Activated CD8-positive, alpha-beta T cell treated with anti-CD3 and anti-CD28 coated beads, Interleukin-2, amount 10 ng/mL, durations not matched to agents 7 days and 5 days (primary cell): ENCODE measurements at regions of chr13 and their contacts with region 1.

Region 1: DNA sequence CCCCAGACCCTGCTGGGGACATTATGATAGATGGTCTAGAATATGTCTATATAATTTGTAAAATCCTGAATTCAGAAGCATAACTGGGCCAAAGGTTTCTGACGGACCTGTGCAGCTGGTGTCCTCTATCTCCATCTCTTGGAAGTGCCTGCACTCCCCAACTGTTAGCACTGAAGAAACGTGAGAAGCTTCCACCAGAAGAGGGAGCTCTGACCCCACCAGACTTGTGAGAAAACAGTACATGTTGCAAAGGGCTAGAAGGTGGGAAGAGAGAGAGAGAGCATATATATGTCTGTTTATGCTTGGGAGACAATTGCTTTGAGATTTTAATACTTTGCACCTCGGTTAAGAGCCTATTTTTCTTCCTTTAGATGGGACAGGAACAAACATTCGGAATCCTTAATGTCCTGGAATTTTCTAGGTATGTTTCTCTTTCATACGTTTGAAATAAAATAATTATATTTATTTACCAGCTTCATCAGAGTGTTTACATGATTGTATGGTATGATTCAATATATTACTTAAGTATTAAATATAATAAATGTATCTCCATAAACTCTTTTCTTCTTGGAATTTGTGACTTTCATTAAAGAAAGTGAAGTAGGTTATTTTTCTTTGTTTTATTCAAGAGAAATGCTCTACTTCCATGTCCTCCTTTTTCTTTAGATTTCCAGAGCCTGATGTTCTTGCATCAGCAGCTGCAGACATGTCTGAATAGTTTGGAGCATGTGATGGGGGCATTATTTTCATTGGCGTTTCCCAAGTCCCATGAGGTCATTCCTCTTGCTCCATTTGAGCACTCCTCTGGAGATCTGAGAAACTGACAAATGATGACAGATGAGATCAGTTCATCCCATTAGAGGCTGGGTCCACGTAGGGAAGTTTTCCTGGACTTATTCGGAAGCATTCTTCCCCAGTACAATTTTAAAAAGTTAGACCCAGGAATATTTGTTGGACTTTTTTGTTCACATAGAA is 202.9 kb downstream of the ATP8A2 start:
- DNase-seq: peak; percentile 83
- ATAC-seq: peak; percentile 78
- H3K4me3 Mint-ChIP-seq: no peak overlapping the region
- H3K27ac Mint-ChIP-seq: no peak overlapping the region
- H3K4me1 Mint-ChIP-seq: peaks cover 2% of the 10 kb centered on the region
- H3K27me3 Mint-ChIP-seq: peaks cover 24% of the 10 kb centered on the region

Region 2: GRCh38 chr13:25501231-25501630 is 73.5 kb before region 1 on chr13:
- CTCF ChIA-PET with region 1: no interaction called
- POLR2A ChIA-PET with region 1: no interaction called
- DNase-seq: no peak
- ATAC-seq: no peak
- H3K4me3 Mint-ChIP-seq: no peak overlapping the region
- H3K27ac Mint-ChIP-seq: no peak overlapping the region
- H3K4me1 Mint-ChIP-seq: no peaks in the 10 kb centered on the region
- H3K27me3 Mint-ChIP-seq: no peaks in the 10 kb centered on the region

Region 3: DNA sequence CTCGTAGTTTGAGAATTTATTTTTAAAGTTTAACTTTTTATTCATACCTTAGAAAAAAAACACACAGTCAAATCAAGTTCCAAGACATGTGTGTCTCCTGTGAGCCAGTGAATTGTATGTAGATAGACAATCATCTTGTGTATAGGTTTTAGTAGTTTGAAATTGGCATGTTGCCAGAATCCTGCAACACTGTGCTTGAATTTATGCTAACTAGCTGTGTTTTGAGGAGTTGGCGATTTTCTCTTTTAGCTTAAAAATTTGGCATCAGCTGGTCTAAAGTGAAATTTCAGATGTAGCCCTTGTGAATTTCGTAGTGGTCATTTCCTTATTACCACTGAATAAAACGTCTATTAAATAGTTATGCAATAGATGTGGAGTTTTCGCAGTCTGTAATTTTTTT is 10.3 kb after region 1 on chr13:
- CTCF ChIA-PET with region 1: interaction called, 20 read pairs
- POLR2A ChIA-PET with region 1: no interaction called
- DNase-seq: no peak
- ATAC-seq: no peak
- H3K4me3 Mint-ChIP-seq: no peak overlapping the region
- H3K27ac Mint-ChIP-seq: no peak overlapping the region
- H3K4me1 Mint-ChIP-seq: no peaks in the 10 kb centered on the region
- H3K27me3 Mint-ChIP-seq: peaks cover 20% of the 10 kb centered on the region

Region 4: DNA sequence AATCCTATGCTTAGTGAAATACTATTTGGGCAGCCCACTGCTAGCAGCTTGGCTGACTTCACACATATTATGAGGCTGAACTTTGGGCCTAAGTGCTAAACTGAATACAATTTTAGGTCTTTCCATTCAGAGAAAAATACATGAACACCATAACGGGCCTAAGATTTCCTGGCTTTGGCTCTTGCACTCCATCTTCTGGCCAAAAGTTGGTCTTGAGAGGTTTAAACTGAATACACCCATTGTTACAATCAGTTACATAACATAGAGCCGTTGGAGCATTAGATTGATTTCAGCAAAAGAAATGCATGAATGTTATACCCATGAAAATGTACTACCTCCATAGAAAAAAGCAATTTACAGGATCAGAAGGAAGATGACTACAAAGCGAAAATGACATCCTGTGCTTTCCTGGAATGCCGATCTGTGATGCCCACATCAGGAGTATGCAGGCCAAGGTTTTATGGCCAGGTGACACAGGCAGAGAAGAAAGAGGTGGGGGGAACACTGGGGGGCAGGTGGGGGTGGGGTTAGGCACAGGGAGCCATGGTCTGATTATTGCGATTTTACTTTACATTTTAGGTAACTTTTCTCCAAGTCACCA is 488.2 kb after region 1 on chr13:
- CTCF ChIA-PET with region 1: interaction called, 15 read pairs
- POLR2A ChIA-PET with region 1: no interaction called
- DNase-seq: peak; percentile 59
- ATAC-seq: peak; percentile 57
- H3K4me3 Mint-ChIP-seq: no peak overlapping the region
- H3K27ac Mint-ChIP-seq: no peak overlapping the region
- H3K4me1 Mint-ChIP-seq: peaks cover 15% of the 10 kb centered on the region
- H3K27me3 Mint-ChIP-seq: peaks cover 11% of the 10 kb centered on the region

Region 5: GRCh38 chr13:26071691-26072090 is 497.0 kb after region 1 on chr13:
- CTCF ChIA-PET with region 1: interaction called, 18 read pairs
- POLR2A ChIA-PET with region 1: no interaction called
- DNase-seq: no peak
- ATAC-seq: no peak
- H3K4me3 Mint-ChIP-seq: no peak overlapping the region
- H3K27ac Mint-ChIP-seq: no peak overlapping the region
- H3K4me1 Mint-ChIP-seq: peaks cover 4% of the 10 kb centered on the region
- H3K27me3 Mint-ChIP-seq: peaks cover 20% of the 10 kb centered on the region